ENCODE measurements at regions of chr12 and their contacts with region 1.

Region 1: GRCh38 chr12:95217377-95218149 is at the starts of genes FGD6 and VEZT:
- DNase-seq: peak; percentile 99
- H3K4me3 Mint-ChIP-seq: peak within 1 kb of the TSS; percentile 84
- H3K27ac Mint-ChIP-seq: peak within 1 kb of the TSS; percentile 90
- H3K4me1 Mint-ChIP-seq: peaks cover 21% of the 10 kb centered on the region
- H3K27me3 Mint-ChIP-seq: no peaks in the 10 kb centered on the region
- CTCF ChIP-seq: peak; percentile 65
- total RNA-seq, gene FGD6: 17.2 and 25.1 TPM in 2 replicates
- total RNA-seq, gene VEZT: 88.1 and 107 TPM in 2 replicates

Region 2: GRCh38 chr12:95072900-95073697 is 144.5 kb before region 1 on chr12 and contains the start of gene NR2C1:
- CTCF ChIA-PET with region 1: no interaction called
- POLR2A ChIA-PET with region 1: interaction called, 34 read pairs
- intact Hi-C with region 1: no loop called
- DNase-seq: peak; percentile 92
- H3K4me3 Mint-ChIP-seq: peak within 1 kb of the TSS; percentile 88
- H3K27ac Mint-ChIP-seq: peak within 1 kb of the TSS; percentile 59
- H3K4me1 Mint-ChIP-seq: peaks cover 4% of the 10 kb centered on the region
- H3K27me3 Mint-ChIP-seq: no peaks in the 10 kb centered on the region
- CTCF ChIP-seq: no peak
- total RNA-seq, gene NR2C1: 29.0 and 35.2 TPM in 2 replicates

Region 3: GRCh38 chr12:95124106-95124505 is 93.5 kb before region 1 on chr12:
- CTCF ChIA-PET with region 1: interaction called, 10 read pairs
- POLR2A ChIA-PET with region 1: interaction called, 158 read pairs
- intact Hi-C with region 1: no loop called
- DNase-seq: no peak
- H3K4me3 Mint-ChIP-seq: no peak overlapping the region
- H3K27ac Mint-ChIP-seq: no peak overlapping the region
- H3K4me1 Mint-ChIP-seq: no peaks in the 10 kb centered on the region
- H3K27me3 Mint-ChIP-seq: no peaks in the 10 kb centered on the region
- CTCF ChIP-seq: no peak

Region 4: DNA sequence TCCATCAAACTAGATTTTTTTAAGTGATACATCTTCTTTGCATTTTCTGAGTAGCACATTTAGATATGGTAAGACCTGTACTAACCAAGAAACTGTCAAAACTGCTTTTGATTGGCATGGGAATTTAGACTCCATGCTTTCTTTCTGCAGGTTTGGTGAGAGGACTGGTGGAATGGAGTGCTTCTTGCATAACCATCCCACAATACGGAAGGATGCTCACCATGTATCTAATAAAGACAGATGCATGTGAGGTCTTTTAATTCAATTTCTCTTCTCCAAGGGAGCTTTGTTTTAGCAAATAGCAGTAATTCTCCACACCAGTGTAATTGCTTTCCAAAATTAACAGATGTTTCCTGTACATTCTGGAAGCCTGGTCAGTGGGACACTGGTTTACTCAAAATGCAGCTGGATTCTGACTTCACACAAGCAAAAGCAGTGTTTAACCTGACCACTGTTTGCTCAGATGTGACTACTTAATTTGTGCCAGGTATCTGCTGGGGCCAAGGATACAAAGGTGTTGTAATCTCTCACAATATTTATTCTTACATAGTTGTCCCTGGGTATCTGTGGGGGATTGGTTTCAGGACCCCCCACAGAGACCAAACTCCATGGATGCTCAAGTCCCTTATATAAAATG is 26.4 kb before region 1 on chr12:
- CTCF ChIA-PET with region 1: interaction called, 7 read pairs
- POLR2A ChIA-PET with region 1: interaction called, 1,056 read pairs
- intact Hi-C with region 1: no loop called
- DNase-seq: no peak
- H3K4me3 Mint-ChIP-seq: no peak overlapping the region
- H3K27ac Mint-ChIP-seq: no peak overlapping the region
- H3K4me1 Mint-ChIP-seq: peaks cover 12% of the 10 kb centered on the region
- H3K27me3 Mint-ChIP-seq: no peaks in the 10 kb centered on the region
- CTCF ChIP-seq: no peak

Region 5: GRCh38 chr12:95231190-95231589 is 13.6 kb after region 1 on chr12:
- CTCF ChIA-PET with region 1: interaction called, 17 read pairs
- POLR2A ChIA-PET with region 1: interaction called, 61 read pairs
- intact Hi-C with region 1: no loop called
- DNase-seq: peak; percentile 36
- H3K4me3 Mint-ChIP-seq: peak overlapping the region; percentile 18
- H3K27ac Mint-ChIP-seq: peak overlapping the region; percentile 55
- H3K4me1 Mint-ChIP-seq: peaks cover 17% of the 10 kb centered on the region
- H3K27me3 Mint-ChIP-seq: no peaks in the 10 kb centered on the region
- CTCF ChIP-seq: no peak

Region 6: GRCh38 chr12:95532851-95533250 is 315.3 kb after region 1 on chr12:
- CTCF ChIA-PET with region 1: interaction called, 6 read pairs
- POLR2A ChIA-PET with region 1: interaction called, 13 read pairs
- intact Hi-C with region 1: loop called (anchors 1 kb)
- DNase-seq: no peak
- H3K4me3 Mint-ChIP-seq: no peak overlapping the region
- H3K27ac Mint-ChIP-seq: no peak overlapping the region
- H3K4me1 Mint-ChIP-seq: peaks cover 18% of the 10 kb centered on the region
- H3K27me3 Mint-ChIP-seq: no peaks in the 10 kb centered on the region
- CTCF ChIP-seq: no peak

Measured in MCF 10A (cell line).